Adrenal gland (tissue), 19 donors: ENCODE measurements at regions of chr15 and their contacts with region 1.

Region 1: DNA sequence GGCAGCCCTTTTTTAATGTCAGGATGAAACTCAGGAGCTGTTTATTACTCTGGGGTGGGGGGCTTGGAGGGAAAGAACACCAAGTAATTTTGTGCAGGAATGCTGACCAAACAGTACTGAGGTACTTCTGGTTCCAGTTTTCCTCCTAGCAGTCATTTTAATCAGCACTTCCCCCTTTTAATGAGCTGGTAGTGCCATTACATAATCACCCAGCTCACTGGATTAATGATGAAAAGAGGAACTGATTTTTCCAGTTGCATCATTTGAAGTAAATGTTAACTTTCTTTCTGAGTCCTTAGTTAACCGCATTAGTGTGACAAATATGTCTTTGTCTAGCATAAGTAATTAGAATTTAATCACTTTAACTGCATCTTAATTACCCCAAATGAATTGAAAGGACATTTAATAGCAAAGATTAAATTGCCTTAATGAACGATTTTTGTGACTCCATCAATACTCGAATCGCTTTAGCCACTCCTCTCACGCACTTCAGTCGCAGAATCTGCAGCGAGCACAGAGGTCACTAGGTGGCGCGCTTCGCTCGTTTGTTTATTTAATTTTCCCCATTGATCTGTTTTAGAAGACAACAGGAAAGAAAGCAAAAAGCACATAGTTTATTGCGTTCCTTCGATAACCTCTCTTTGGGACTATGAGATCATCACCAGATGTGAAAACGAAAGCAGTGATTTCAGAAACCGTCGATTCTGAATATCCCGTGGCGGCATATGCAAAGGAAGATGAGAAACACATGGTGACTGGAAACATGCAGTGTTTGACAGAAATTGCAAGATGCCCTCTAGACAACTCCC is 9.8 kb downstream of the ONECUT1 start:
- DNase-seq: peak; percentile 46 to 85 (median 67)
- H3K4me3 ChIP-seq: peak overlapping the region in 1 of 4 donors; percentile 24
- H3K27ac ChIP-seq: no peak overlapping the region
- H3K4me1 ChIP-seq: peaks cover 0 to 13% of the 10 kb centered on the region in 2 donors
- H3K27me3 ChIP-seq: peaks cover 45% of the 10 kb centered on the region
- CTCF ChIP-seq: peak; percentile 66 to 89 (median 78)
- POLR2A ChIP-seq: no peak

Region 2: DNA sequence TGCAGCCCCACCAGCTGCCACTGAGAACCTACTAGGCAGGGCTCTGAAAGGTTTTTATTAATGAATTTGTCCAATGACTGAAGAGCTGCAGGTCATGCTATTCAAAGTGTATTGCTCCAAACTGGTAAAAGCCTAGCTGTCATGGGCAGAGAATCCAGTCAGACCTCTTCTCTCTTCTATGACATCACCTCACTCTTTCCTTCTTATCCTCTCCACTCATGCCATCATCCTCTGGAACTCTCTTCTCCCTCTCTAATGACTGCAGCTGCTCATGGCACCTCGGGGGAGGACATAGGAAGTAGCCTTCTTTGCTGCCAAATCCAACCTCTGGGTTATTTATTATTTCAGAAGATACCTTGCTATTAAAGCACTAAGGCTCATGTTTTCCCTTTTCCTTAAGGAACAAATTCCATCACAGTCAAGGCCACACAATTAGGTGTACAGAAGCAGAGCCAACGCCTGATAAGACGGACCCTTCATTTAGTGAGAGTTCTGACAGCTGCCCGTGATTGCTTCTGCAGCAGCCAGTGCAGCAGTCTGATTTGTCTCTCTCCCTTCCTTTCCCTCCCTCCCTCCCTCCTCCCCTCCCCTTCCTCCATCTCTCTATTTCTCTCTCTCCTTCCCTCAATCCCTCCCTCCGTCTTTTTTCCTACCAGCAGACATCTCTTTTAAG is 96.8 kb after region 1 on chr15:
- intact Hi-C with region 1: no loop called
- DNase-seq: no peak
- H3K4me3 ChIP-seq: no peak overlapping the region
- H3K27ac ChIP-seq: no peak overlapping the region
- H3K4me1 ChIP-seq: no peaks in the 10 kb centered on the region
- H3K27me3 ChIP-seq: no peaks in the 10 kb centered on the region
- CTCF ChIP-seq: no peak
- POLR2A ChIP-seq: no peak

Region 3: DNA sequence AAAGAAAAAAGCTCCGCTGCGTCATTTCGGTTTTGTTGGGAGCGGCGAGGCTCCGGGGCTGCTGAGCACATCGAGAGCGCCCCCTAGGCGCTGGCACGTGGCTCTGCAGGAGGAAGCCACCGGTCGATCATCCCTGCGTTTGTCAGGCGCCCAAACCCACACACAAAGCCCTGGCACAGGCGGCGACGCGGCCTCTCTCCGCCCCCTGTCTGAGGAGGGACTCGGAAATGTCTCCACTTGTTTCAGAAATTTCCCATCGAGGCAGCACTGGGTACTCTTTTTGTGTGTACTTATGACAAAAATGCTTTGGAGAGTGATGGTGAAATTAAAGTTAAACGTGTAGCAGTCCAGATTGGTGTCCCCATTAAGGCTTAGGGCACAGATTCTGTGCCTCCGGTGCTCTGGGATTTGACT is 417.1 kb after region 1 on chr15:
- intact Hi-C with region 1: loop called (anchors 5 to 10 kb)
- DNase-seq: peak; percentile 40 to 74 (median 61)
- H3K4me3 ChIP-seq: peak overlapping the region in 1 of 4 donors; percentile 18
- H3K27ac ChIP-seq: no peak overlapping the region
- H3K4me1 ChIP-seq: peaks cover 0 to 7% of the 10 kb centered on the region in 2 donors
- H3K27me3 ChIP-seq: peaks cover 19% of the 10 kb centered on the region
- CTCF ChIP-seq: peak; percentile 63 to 82 (median 74)
- POLR2A ChIP-seq: no peak

Region 4: DNA sequence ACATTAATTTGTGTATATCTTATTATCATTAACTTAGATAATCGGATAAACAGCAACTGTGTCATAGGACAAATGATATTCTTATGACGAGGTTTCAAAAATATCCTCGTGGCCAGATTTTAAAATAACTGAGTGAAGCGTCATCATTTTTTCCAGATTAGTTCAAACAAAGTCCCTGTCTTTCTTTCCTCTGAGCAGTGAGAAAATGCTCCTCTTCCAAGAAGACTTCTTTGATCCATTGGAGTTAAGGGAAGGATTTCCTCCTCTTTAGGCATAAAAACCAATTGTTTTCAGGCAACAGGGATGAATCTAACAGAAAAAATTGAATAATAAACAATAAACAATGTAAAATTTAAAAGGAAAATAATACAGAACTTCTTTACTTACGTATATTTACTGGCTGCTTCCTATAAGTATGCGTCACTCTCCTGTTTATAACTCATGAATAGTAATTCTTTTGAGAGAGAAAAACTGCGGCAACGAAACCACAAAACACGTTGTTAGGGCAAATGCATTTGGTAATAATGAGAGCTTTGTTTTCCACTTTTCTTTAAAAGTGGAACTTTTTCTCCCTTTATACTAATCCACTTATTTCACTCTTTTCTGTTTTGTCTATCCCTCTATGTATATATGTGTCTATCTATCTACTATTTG is 429.1 kb after region 1 on chr15:
- intact Hi-C with region 1: no loop called
- DNase-seq: no peak
- H3K4me3 ChIP-seq: no peak overlapping the region
- H3K27ac ChIP-seq: no peak overlapping the region
- H3K4me1 ChIP-seq: no peaks in the 10 kb centered on the region
- H3K27me3 ChIP-seq: no peaks in the 10 kb centered on the region
- CTCF ChIP-seq: no peak
- POLR2A ChIP-seq: no peak

Region 5: GRCh38 chr15:53716909-53717876 is 936.8 kb after region 1 on chr15:
- intact Hi-C with region 1: loop called in 1 of 2 experiments (anchors 5 kb)
- DNase-seq: no peak
- H3K4me3 ChIP-seq: no peak overlapping the region
- H3K27ac ChIP-seq: no peak overlapping the region
- H3K4me1 ChIP-seq: no peaks in the 10 kb centered on the region
- H3K27me3 ChIP-seq: peaks cover 5% of the 10 kb centered on the region
- CTCF ChIP-seq: peak; percentile 23 to 53 (median 34)
- POLR2A ChIP-seq: no peak